Dendritic cell treated with granulocyte-macrophage colony-stimulating factor and Interleukin-4, amounts not matched to agents 40 ng/mL and 50 ng/mL, for 4 days (primary cell): ENCODE measurements at regions of chr3 and their contacts with region 1.

Region 1: GRCh38 chr3:45037734-45038455 is 11.8 kb downstream of the CLEC3B start:
- H3K4me3 Mint-ChIP-seq: no peak overlapping the region
- H3K27ac Mint-ChIP-seq: peak overlapping the region; percentile 99
- H3K4me1 Mint-ChIP-seq: peaks cover 62% of the 10 kb centered on the region
- H3K27me3 Mint-ChIP-seq: peaks cover 2% of the 10 kb centered on the region

Region 2: GRCh38 chr3:45210308-45211041 is 172.6 kb after region 1 on chr3:
- intact Hi-C with region 1: loop called (anchors 1 kb)
- H3K4me3 Mint-ChIP-seq: no peak overlapping the region
- H3K27ac Mint-ChIP-seq: no peak overlapping the region
- H3K4me1 Mint-ChIP-seq: peaks cover 15% of the 10 kb centered on the region
- H3K27me3 Mint-ChIP-seq: peaks cover 5% of the 10 kb centered on the region

Region 3: DNA sequence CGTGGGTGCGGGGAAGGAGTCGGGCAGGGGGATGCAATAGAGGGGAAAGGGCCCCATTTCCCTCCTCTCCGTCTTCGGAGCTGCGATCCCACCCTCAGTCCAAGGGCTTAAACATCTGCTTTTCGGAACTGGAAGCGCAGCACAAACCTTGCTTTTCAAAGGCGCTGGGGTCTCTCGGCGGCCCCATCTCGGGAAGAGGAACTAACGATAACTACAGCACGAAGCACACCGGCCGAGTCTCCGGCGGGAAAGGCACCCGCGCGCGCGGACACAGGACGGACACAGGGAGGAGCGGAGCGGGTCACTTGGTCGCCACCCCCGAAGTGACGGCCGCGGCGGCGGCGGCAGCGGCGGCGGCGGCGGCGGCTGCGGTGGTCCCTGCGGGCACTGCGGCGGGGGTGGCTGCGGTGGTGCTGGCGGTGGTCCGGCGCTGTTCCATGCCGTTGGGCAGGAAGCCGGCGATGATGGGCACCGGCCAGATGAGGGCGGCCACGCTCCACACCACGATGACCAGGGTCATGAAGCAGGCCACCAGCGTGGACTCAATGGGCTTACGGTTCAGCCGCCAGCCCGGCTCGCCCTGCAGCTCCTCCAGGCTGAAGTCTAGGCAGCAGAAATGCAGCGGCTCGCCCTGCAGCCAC is 187.0 kb after region 1 on chr3:
- intact Hi-C with region 1: loop called (anchors 5 kb)
- H3K4me3 Mint-ChIP-seq: peak overlapping the region; percentile 82
- H3K27ac Mint-ChIP-seq: peak overlapping the region; percentile 34
- H3K4me1 Mint-ChIP-seq: peaks cover 16% of the 10 kb centered on the region
- H3K27me3 Mint-ChIP-seq: peaks cover 72% of the 10 kb centered on the region

Region 4: DNA sequence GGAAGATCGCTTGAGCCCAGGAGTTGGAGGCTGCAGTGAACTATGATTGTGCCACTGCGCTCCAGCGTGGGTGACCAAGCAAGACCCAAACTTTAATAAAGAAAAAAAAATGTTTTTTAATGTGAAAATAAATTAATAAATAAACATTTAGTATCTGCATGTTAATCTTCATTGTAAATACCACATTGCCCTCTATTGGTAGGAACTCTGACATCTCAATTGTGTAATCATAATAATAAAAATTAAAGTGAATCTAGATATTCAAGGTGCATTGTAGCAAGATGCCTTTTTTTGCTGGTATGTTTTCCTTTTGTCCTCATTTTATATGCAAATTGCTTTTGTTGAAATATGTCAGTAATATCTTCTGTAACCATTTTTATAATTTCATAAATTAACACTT is 461.6 kb after region 1 on chr3:
- intact Hi-C with region 1: loop called (anchors 2 kb)
- H3K4me3 Mint-ChIP-seq: no peak overlapping the region
- H3K27ac Mint-ChIP-seq: no peak overlapping the region
- H3K4me1 Mint-ChIP-seq: no peaks in the 10 kb centered on the region
- H3K27me3 Mint-ChIP-seq: no peaks in the 10 kb centered on the region